Adrenal gland (tissue), 19 donors: ENCODE measurements at regions of chr3 and their contacts with region 1.

Region 1: DNA sequence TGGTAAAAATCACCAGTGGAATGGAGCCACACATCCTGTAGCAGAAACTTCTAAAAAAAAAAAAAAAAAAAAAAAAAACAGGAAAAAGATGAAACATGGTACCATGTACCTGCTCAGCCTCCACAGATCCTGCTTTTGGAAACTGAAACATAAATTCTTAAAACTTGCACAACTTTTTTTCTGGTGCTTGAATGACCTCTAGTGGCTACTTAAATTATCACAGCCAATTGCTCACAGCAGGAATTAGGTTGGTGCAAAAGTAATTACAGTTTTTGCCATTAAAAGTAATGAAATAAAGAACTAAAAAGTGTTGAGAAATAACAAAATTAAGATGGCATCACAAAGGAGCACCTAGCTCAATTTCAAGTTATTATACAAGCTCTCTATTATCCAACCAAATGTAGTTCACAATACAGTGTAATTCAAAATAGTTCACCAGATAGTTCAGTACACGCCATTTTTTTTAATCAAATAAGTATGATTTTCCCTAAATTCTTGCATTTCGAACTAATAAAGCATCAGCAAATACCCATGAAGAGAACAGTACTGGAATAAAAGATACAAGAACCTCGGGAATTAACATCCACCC is 80.6 kb downstream of the ULK4 start:
- DNase-seq: peak in 2 of 7 donors; percentile 20 to 23
- H3K4me3 ChIP-seq: no peak overlapping the region
- H3K27ac ChIP-seq: no peak overlapping the region
- H3K4me1 ChIP-seq: no peaks in the 10 kb centered on the region
- H3K27me3 ChIP-seq: no peaks in the 10 kb centered on the region
- CTCF ChIP-seq: peak; percentile 66 to 82 (median 74)
- POLR2A ChIP-seq: no peak

Region 2: DNA sequence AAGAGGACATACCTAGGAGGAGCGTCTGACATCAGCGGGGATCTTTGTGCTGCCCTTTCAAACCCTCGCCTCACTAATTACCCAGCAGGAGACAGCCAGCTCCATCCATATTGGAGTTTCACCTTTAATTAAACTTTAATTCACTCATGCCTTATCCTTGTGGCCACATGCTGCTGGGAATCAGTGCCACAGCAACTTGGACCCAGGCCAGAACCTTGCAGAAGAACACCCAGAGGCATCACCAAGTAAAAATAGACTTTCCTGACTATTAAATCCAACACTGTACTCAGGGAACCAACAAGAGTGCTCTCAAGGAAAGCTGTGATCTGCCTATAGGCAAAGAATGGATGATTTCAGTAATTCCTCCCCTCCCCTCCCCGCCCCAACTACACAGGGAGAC is 1547.9 kb before region 1 on chr3:
- intact Hi-C with region 1: loop called in 1 of 2 experiments (anchors 5 kb)
- DNase-seq: peak in 2 of 7 donors; percentile 15 to 26
- H3K4me3 ChIP-seq: no peak overlapping the region
- H3K27ac ChIP-seq: no peak overlapping the region
- H3K4me1 ChIP-seq: no peaks in the 10 kb centered on the region
- H3K27me3 ChIP-seq: no peaks in the 10 kb centered on the region
- CTCF ChIP-seq: no peak
- POLR2A ChIP-seq: no peak

Region 3: DNA sequence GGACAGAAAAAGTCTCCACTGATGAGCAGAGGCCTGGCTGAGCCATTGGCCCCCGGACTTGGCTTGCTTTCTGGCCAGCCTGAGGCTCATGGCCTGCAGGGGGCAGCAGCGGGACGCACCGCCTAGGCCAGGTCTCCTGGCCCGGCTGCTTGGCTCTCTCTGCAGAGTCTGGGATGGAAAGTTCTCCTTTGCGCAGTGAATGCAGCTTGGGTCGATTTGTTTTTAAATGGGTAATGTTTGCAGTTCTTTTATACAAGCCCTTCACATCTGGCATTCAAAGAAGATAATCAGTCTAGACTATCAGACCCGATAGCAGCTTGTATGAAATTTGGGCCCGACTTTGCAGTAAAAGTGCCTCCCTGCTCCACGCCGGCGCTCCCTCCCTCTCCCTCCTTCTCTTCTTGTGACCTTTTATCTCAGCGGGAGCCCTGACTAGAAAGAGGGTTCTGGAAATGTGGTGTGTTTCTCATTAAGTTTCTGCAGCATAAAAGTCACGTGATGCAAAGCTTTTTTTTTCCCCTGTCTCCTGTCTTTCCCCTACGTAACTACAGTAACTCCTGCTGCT is 1296.6 kb before region 1 on chr3:
- intact Hi-C with region 1: loop called (anchors 2 to 5 kb)
- DNase-seq: peak; percentile 80 to 95 (median 89)
- H3K4me3 ChIP-seq: no peak overlapping the region
- H3K27ac ChIP-seq: peak overlapping the region in 1 of 5 donors; percentile 19
- H3K4me1 ChIP-seq: peaks cover 0 to 3% of the 10 kb centered on the region in 2 donors
- H3K27me3 ChIP-seq: no peaks in the 10 kb centered on the region
- CTCF ChIP-seq: peak; percentile 74 to 97 (median 94)
- POLR2A ChIP-seq: no peak

Region 4: DNA sequence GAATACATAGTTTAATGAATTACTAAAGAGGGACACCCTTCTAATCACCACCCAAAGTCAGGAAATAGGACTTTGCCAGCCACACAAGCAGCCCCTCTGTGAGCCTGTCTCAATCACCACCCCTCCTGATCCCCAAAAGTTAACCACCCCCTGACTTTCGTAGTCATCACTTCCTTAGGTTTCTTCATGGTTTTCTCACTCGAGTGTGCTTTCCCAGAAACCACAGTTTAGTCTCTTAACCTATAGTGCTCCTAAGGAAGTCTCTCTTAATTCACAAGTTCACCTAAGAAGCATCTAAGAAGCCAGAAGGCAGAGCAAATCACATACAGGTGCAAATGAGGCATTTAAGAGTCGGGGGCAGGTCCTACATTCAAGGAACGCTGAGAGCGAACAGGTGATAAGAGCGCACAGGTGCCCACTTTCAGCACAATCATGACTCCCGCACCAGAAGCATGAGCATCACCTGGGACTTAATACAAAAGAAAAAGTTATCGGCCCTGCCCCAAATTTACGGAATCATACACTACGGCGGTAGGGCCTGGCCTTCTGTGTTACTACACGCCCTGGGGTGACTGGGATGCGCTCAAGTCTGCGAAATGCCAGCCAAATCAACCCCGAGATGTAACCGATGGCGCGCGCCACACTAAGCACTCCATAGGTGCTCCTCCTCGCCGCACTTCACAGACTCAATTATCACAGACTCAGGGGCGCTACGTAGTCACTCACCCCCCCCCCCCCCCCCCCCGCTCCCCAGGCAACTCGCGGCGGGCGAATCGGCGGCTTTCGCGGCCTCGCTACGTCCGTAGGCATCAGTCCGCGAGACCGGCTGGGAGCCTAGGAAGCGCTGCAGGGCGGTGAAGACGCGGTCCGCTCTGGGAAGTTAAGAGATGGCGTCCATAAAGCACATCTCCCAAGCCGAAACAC is 79.8 kb after region 1 on chr3:
- intact Hi-C with region 1: no loop called
- DNase-seq: peak; percentile 48 to 76 (median 65)
- H3K4me3 ChIP-seq: peak overlapping the region; percentile 62 to 88 (median 74)
- H3K27ac ChIP-seq: peak overlapping the region; percentile 39 to 89 (median 72)
- H3K4me1 ChIP-seq: peaks cover 5 to 8% of the 10 kb centered on the region in 2 donors
- H3K27me3 ChIP-seq: no peaks in the 10 kb centered on the region
- CTCF ChIP-seq: no peak
- POLR2A ChIP-seq: no peak